ENCODE measurements at regions of chr2 and their contacts with region 1.

Region 1: DNA sequence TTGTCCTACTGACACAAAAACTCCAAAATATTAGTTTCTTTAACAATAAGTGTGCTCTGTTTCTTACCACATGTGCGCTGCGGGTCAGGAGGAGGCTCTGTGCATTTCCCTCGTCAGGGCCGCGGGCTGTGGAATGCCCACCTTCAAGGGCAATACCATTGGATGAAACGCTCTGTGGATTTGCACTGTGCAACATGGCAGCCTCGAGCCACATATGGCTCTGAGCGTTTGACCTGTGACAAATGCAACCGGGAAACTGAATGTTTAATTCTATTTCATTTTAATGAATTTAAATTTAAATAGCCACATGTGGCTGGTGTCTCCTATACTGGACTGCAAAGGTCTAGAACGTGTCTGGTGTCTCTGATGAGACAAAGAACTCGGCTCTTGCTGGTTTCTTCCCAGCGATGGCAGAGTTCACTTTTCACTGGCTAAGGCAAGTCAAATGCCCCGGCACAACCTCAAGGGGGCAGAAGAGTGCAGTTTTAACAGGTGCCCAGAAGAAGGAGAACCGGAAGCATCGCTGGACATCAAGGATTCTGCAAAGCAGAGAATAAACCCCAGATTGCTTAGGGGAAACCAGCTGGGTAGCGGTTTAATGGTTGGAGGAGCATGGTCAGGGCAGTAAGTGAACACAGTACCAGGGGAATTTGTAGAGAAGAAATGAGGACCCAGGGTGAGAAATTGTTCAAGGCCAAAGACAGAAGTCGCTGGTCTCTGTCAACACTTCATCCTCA is 37.0 kb upstream of the TMEM18 start:
- DNase-seq: peak; percentile 69
- ATAC-seq: peak; percentile 76
- H3K4me3 Mint-ChIP-seq: no peak overlapping the region
- H3K27ac Mint-ChIP-seq: no peak overlapping the region
- H3K4me1 Mint-ChIP-seq: peaks cover 20% of the 10 kb centered on the region
- H3K27me3 Mint-ChIP-seq: peaks cover 3% of the 10 kb centered on the region; the same call in 1 of the 2 replicates
- CTCF ChIP-seq: peak; percentile 59

Region 2: DNA sequence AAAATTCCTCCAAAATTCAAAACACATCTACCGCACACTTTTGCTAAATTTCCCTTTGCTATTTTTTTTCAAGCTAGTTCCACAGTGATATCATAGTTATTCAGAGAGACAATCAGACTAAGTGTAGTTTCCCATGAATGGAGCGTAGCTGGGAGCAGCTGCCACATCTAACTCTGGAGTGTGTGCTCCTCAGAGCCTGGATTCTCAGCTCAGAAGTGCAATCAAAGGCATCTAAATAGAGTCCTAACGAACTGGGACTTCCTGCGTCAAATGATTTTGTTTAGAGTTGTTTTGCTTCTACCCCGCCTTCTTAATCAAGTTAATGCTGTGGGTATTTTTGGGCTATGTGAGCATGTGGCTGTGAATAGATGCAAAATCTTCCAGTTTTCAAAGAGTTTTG is 197.2 kb before region 1 on chr2:
- CTCF ChIA-PET with region 1: no interaction called
- POLR2A ChIA-PET with region 1: no interaction called
- DNase-seq: no peak
- ATAC-seq: no peak
- H3K4me3 Mint-ChIP-seq: no peak overlapping the region
- H3K27ac Mint-ChIP-seq: no peak overlapping the region
- H3K4me1 Mint-ChIP-seq: peaks cover 5% of the 10 kb centered on the region
- H3K27me3 Mint-ChIP-seq: peaks cover 26% of the 10 kb centered on the region
- CTCF ChIP-seq: no peak

Region 3: GRCh38 chr2:735670-736582 is 21.8 kb after region 1 on chr2:
- CTCF ChIA-PET with region 1: interaction called, 24 read pairs
- POLR2A ChIA-PET with region 1: interaction called, 6 read pairs
- DNase-seq: no peak
- ATAC-seq: peak; percentile 50
- H3K4me3 Mint-ChIP-seq: no peak overlapping the region
- H3K27ac Mint-ChIP-seq: no peak overlapping the region; the same call in 1 of the 2 replicates
- H3K4me1 Mint-ChIP-seq: peaks cover 37% of the 10 kb centered on the region
- H3K27me3 Mint-ChIP-seq: no peaks in the 10 kb centered on the region; the same call in 1 of the 2 replicates
- CTCF ChIP-seq: no peak

Region 4: GRCh38 chr2:746697-747096 is 32.5 kb after region 1 on chr2:
- CTCF ChIA-PET with region 1: no interaction called
- POLR2A ChIA-PET with region 1: no interaction called
- DNase-seq: no peak
- ATAC-seq: no peak
- H3K4me3 Mint-ChIP-seq: no peak overlapping the region
- H3K27ac Mint-ChIP-seq: no peak overlapping the region
- H3K4me1 Mint-ChIP-seq: peaks cover 17% of the 10 kb centered on the region
- H3K27me3 Mint-ChIP-seq: no peaks in the 10 kb centered on the region; the same call in 1 of the 2 replicates
- CTCF ChIP-seq: no peak

Region 5: DNA sequence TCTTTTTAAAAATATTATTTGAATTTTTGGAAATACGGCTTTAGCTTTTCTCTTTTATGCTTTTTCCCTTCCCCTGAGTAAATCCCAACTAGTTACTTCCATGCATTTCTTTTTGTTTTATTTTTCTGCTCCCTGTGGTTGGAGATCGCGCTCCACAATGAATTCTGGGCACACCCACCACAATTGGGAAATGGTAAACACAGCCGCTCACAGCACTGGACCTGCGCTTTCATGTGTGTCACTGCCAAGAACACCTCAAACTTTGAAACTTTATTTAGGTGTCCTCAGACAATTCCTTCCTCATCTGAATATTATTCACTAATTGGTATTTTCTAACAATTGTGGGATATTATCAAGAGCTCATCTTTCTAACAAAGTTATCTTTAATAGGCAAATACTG is 45.8 kb after region 1 on chr2:
- CTCF ChIA-PET with region 1: interaction called, 10 read pairs
- POLR2A ChIA-PET with region 1: no interaction called
- DNase-seq: no peak
- ATAC-seq: no peak
- H3K4me3 Mint-ChIP-seq: no peak overlapping the region
- H3K27ac Mint-ChIP-seq: peak overlapping the region; percentile 11; the same call in 1 of the 2 replicates
- H3K4me1 Mint-ChIP-seq: peaks cover 18% of the 10 kb centered on the region
- H3K27me3 Mint-ChIP-seq: peaks cover 3% of the 10 kb centered on the region; the same call in 1 of the 2 replicates
- CTCF ChIP-seq: no peak

Region 6: DNA sequence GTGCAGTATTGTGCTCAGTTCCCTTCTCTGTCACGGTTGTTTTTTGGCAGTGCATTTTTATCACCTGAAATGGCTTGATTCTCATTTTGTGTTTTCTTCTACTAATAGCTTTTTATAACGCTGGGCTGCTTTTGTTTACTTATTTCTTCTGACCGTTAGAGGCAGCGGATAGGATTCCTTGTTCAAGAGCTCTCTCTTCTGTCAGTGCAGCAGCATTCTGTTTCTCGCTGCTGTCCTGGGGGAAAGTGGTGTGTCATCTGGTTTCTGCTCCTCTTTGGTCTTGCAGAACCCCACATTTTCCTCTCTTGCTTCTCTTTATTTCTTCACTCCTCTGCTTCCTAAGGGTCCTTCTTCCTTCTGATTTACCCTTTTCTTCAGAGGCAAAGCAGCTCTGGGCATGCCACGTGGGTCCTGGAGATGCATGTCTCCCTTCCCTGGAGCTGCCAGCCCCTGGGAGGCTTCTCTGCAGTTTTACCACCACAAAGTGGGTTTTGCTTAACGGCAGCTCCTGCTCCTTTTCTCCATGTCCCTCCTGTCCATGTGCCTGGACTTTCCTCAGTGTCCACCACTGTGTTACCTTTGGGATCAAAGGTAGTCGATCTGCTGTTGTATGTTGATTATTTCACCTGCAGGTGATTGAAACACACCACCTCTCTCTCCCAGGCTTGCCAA is 189.2 kb after region 1 on chr2:
- CTCF ChIA-PET with region 1: interaction called, 16 read pairs
- POLR2A ChIA-PET with region 1: no interaction called
- DNase-seq: no peak
- ATAC-seq: no peak
- H3K4me3 Mint-ChIP-seq: peak overlapping the region; percentile 12; the same call in 1 of the 2 replicates
- H3K27ac Mint-ChIP-seq: peak overlapping the region; percentile 85
- H3K4me1 Mint-ChIP-seq: peaks cover 32% of the 10 kb centered on the region
- H3K27me3 Mint-ChIP-seq: peaks cover 19% of the 10 kb centered on the region; the same call in 1 of the 2 replicates
- CTCF ChIP-seq: no peak

Measured in WTC11 (cell line).